ENCODE measurements at regions of chr1 and their contacts with region 1.

Region 1: DNA sequence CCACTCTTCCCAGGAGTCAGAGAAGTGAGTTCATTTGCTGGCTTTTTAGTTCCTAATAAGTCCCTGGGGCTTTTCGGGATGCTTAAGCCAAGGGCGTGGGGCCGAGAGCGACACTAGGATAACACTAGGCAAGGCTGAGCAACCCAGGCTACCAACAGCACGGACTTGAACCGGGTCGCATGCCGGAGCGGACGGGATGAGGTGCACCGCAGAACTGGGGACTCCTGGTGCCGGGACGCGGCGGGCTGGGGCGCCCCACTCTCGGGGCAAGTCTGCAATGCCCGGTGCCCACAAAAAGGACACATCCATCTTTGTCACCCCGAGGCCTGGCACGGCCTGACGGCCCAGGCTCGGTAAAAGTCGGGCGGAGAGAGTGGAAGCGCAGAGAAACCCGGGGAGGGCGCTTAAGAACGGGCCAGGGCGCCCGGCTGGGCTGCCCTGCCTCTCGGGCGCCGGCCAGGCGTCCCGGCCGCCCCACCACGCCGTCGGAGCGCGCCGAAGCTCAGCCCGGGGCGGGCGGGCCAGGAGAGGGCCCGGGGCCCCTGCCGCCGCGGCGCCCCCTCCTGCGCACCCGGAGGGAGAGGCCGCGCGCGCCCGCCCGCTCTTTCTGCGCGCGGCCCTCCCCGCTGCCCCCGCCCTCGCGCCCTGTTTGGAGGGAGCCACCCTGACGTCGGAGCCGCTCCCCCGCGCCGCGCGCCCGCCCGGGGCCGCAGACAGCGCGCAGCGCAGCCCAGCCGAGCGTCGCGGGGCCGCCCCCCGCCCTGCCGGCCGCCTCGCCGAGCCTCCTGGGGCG is at the start of gene NBL1:
- DNase-seq: peak; percentile 37
- H3K4me3 ChIP-seq: peak within 1 kb of the TSS; percentile 87
- H3K27ac ChIP-seq: peak within 1 kb of the TSS; percentile 68
- H3K27me3 ChIP-seq: no peaks in the 10 kb centered on the region
- CTCF ChIP-seq: no peak

Region 2: DNA sequence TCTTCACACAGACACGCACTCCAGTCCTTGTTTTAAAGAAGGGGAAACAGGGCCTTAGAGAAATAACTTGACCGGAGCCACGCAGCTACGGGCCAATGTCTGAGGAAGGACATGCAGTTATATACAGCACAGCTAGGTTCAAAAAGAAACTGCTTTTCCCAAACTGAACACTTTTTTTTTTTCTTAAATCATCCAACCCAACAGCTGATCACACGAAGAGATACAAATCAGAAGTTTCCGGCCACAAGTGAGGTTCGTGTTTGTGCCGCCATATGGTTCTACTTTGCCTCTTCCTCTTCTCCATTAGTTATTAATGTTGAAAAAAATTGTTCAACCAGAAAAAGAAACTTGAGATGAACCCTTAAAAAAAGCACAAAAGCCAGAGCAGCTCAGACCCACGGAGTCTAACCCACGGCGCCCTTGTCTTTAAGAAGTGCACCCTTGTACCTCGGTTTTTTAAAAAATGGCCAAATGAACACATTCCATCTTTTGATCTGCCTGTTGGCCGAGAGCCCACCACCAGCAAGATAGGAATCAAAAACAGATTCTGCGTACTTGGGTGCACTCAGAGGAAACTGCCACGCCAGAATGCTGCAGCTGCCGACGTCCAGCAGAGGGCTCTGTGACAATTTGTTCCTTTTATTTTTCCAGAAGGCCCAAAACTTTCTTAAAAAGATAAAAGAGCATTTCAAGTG is 252.8 kb before region 1 on chr1:
- in situ Hi-C with region 1: loop called (anchors 25 kb)
- DNase-seq: peak; percentile 70
- H3K4me3 ChIP-seq: no peak overlapping the region
- H3K27ac ChIP-seq: peak overlapping the region; percentile 46
- H3K27me3 ChIP-seq: no peaks in the 10 kb centered on the region
- CTCF ChIP-seq: peak; percentile 92

Region 3: DNA sequence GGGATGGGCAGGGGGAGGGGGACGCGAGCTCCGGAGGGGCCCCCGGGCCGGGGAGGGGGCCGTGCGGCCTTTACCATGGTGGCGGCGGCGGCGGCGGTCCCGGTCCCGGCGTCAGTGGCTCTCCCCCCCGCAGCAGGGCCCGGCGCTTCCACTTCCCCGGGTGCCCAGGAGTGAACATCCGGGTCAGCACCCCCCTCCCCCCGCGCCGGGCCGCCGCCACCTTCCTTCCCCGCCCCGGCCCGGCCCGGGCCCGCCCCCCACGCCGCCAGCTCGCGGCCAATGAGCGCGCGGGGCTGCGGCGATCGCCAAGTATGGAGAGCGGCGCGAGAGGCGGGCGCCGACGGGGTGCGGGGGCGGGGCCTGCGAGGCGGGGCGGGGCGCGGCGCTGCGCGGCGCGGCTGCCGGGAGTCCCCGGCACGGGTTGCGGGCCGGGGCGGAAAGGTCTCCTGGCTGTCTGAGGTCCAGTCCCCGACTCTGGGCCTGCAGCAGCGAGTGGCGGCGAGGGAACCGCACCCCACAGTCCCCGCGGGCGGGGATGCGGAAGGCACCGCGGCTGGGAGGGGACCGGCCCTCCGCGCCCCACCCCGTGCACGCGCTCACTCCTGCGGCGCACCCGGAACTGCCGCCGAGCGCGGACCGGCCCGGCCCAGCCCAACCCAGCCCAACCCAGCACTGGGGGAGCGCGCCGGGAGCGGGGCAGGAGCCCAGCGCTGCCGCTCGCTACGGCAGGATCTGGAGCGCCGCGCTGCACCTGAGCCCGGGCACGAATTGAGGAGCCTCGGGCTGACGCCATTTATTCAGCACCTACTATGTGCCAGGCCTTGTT is 158.2 kb before region 1 on chr1 and contains the start of gene CAPZB:
- in situ Hi-C with region 1: loop called (anchors 10 kb)
- DNase-seq: peak; percentile 71
- H3K4me3 ChIP-seq: peak within 1 kb of the TSS; percentile 89
- H3K27ac ChIP-seq: peak within 1 kb of the TSS; percentile 91
- H3K27me3 ChIP-seq: no peaks in the 10 kb centered on the region
- CTCF ChIP-seq: no peak

Region 4: DNA sequence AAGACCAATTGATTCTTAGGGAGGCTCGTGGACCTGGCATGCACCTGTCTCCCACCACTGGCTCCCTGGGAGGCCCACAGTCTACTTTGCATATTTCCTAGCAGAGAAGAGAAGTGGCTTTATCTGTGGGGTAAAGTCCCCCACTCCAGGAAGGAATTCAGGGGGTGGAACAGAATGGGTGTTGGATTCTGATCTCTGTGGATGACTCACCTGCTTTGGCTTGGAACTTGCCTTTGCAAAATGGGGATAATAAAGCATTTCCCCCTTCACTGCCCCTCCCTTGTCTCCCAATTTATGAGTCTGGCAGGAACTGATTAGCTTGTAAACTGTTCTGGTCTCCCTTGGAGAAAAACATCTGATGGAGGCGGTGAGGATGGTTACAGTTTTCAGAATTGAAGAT is 217.2 kb after region 1 on chr1:
- in situ Hi-C with region 1: no loop called
- DNase-seq: peak; percentile 18
- H3K4me3 ChIP-seq: no peak overlapping the region
- H3K27ac ChIP-seq: no peak overlapping the region
- H3K27me3 ChIP-seq: no peaks in the 10 kb centered on the region
- CTCF ChIP-seq: no peak

Measured in brain microvascular endothelial cell (primary cell).